Right ventricle myocardium inferior (tissue), 1 donor: ENCODE measurements at regions of chr1 and their contacts with region 1.

Region 1: DNA sequence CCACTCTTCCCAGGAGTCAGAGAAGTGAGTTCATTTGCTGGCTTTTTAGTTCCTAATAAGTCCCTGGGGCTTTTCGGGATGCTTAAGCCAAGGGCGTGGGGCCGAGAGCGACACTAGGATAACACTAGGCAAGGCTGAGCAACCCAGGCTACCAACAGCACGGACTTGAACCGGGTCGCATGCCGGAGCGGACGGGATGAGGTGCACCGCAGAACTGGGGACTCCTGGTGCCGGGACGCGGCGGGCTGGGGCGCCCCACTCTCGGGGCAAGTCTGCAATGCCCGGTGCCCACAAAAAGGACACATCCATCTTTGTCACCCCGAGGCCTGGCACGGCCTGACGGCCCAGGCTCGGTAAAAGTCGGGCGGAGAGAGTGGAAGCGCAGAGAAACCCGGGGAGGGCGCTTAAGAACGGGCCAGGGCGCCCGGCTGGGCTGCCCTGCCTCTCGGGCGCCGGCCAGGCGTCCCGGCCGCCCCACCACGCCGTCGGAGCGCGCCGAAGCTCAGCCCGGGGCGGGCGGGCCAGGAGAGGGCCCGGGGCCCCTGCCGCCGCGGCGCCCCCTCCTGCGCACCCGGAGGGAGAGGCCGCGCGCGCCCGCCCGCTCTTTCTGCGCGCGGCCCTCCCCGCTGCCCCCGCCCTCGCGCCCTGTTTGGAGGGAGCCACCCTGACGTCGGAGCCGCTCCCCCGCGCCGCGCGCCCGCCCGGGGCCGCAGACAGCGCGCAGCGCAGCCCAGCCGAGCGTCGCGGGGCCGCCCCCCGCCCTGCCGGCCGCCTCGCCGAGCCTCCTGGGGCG is at the start of gene NBL1:
- DNase-seq: peak; percentile 80
- ATAC-seq: peak; percentile 86
- total RNA-seq, gene NBL1: 55.0 TPM

Region 2: GRCh38 chr1:19504796-19505692 is 138.8 kb before region 1 on chr1:
- intact Hi-C with region 1: loop called (anchors 5 kb)
- DNase-seq: no peak
- ATAC-seq: peak; percentile 88

Region 3: GRCh38 chr1:19563324-19564097 is 80.3 kb before region 1 on chr1:
- intact Hi-C with region 1: no loop called
- DNase-seq: peak; percentile 73
- ATAC-seq: peak; percentile 88

Region 4: DNA sequence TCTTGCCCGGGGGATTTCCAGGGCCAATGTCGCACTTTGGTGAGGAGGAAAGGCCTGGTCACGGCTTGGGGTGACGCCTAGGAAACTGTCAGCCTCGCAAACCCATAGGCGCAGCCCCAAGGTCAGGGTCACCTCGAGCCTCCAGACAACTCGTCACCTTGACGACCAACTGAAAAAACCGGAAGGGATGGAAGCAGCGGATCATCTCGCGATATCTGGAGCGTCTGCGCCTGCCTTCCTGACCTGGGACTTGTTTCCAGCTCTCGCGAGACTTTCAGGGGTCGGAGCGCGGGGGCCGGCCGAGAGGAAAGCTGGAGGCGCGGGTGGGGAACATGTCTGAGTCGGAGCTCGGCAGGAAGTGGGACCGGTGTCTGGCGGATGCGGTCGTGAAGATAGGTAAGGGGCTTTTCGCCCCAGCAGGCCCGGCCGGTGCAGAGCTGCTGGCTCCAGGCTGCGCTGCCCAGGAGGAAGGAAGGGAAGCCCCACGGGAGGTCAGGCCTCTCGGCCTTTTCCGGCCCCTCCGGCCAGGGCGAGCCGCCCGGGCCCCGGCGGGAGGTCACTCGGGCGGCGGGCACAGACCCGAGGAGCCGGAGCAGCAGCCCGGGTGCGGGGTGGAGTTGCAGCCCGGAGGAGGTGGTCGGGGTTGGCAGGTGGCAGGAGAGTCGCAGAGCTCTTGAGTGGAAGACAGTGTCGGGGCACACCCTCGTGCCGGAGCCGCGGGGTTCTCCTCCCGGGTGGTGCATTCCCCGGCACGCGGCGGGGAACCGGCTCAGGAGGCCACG is 46.9 kb before region 1 on chr1:
- intact Hi-C with region 1: loop called (anchors 2 kb)
- DNase-seq: peak; percentile 96
- ATAC-seq: peak; percentile 93